ENCODE measurements at regions of chr6 and their contacts with region 1.

Region 1: GRCh38 chr6:17392978-17393891 is at the start of gene CAP2:
- DNase-seq: peak; percentile 66 to 76
- ATAC-seq: peak; percentile 83 to 97 (median 94)
- H3K4me3 ChIP-seq: peak within 1 kb of the TSS; percentile 21 to 66 (median 58)
- H3K27ac ChIP-seq: peak within 1 kb of the TSS; percentile 59 to 93 (median 76)
- H3K4me1 ChIP-seq: peaks cover 0 to 15% (median 8%) of the 10 kb centered on the region in 9 donors
- H3K27me3 ChIP-seq: peaks cover 0 to 37% (median 0%) of the 10 kb centered on the region in 7 donors
- CTCF ChIP-seq: no peak
- total RNA-seq, gene CAP2: 116 to 211 (median 172) TPM

Region 2: DNA sequence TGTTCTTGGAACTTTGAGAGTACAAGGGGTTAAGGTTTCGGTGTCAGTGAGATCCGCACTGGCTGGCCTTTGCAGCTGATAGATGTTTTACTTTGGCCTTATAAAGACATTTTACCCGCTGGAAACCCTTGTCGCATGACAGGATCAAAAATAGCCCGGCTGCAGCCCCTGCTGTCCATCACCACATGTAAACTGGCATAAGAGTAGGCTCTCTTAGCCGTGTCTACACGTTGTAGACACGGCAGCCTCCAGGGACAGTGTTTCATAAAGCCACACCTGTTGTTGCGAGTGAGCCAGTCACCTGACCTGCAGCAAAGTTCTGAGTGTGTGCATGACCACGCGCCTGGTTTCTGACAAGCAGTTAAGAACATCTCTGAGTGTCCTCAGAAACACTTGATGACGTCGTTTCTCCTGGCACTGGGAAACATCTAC is 103.6 kb before region 1 on chr6:
- intact Hi-C with region 1: loop called in 5 of 10 experiments (anchors 5 to 10 kb)
- DNase-seq: peak; percentile 51 to 79
- ATAC-seq: peak; percentile 79 to 95 (median 89)
- H3K4me3 ChIP-seq: peak overlapping the region in 8 of 10 donors; percentile 2 to 44 (median 32)
- H3K27ac ChIP-seq: peak overlapping the region; percentile 58 to 94 (median 82)
- H3K4me1 ChIP-seq: peaks cover 0 to 62% (median 6%) of the 10 kb centered on the region in 9 donors
- H3K27me3 ChIP-seq: peaks cover 0 to 11% (median 0%) of the 10 kb centered on the region in 7 donors
- CTCF ChIP-seq: no peak

Region 3: GRCh38 chr6:17305219-17306001 is 87.8 kb before region 1 on chr6:
- intact Hi-C with region 1: loop called in 1 of 10 experiments (anchors 10 kb)
- DNase-seq: no peak
- ATAC-seq: peak in 1 of 8 donors; percentile 11
- H3K4me3 ChIP-seq: no peak overlapping the region
- H3K27ac ChIP-seq: no peak overlapping the region
- H3K4me1 ChIP-seq: peaks cover 0 to 10% (median 0%) of the 10 kb centered on the region in 9 donors
- H3K27me3 ChIP-seq: no peaks in the 10 kb centered on the region
- CTCF ChIP-seq: no peak

Region 4: DNA sequence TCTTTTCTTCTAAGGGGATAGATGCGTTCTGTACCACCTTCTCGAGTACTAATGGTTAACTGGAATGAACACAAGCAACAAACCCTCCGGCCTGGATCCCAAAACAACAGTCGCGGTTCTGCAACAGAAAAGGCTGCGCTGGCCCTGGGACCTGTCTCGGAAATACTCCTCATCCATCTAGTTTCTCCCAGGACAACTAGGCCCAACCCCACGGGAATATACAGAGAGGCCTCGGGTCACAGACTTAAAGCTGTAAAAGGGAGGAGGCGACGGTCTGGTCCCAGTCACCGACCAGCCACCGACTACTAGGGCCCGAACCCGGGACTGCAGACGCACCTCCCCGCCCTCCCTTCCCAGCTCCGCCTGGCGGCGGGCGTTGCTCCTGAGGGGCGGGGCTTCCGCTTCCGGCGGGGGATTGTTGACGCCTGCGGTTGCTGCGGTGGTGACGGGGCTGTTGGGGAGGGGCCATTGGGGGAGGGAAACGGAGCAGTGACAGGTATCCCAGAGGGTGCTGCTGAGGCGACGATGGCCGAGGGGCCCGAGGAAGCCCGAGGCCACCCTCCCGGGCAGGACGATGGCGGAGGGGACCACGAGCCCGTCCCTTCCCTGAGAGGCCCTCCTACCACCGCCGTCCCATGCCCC is 206.8 kb after region 1 on chr6 and contains the start of gene FAM8A1:
- intact Hi-C with region 1: no loop called
- DNase-seq: peak; percentile 96 to 97
- ATAC-seq: peak; percentile 98 to 99 (median 99)
- H3K4me3 ChIP-seq: peak within 1 kb of the TSS; percentile 51 to 99 (median 84)
- H3K27ac ChIP-seq: peak within 1 kb of the TSS; percentile 78 to 98 (median 94)
- H3K4me1 ChIP-seq: peaks cover 4 to 34% (median 11%) of the 10 kb centered on the region in 9 donors
- H3K27me3 ChIP-seq: no peaks in the 10 kb centered on the region
- CTCF ChIP-seq: peak; percentile 21 to 78 (median 55)
- total RNA-seq, gene FAM8A1: 14.5 to 23.2 (median 16.5) TPM

Measured in heart right ventricle (tissue), 16 donors.